Activated naive CD4-positive, alpha-beta T cell treated with anti-CD3 and anti-CD28 coated beads for 36 hours (primary cell): ENCODE measurements at regions of chr1 and their contacts with region 1.

Region 1: DNA sequence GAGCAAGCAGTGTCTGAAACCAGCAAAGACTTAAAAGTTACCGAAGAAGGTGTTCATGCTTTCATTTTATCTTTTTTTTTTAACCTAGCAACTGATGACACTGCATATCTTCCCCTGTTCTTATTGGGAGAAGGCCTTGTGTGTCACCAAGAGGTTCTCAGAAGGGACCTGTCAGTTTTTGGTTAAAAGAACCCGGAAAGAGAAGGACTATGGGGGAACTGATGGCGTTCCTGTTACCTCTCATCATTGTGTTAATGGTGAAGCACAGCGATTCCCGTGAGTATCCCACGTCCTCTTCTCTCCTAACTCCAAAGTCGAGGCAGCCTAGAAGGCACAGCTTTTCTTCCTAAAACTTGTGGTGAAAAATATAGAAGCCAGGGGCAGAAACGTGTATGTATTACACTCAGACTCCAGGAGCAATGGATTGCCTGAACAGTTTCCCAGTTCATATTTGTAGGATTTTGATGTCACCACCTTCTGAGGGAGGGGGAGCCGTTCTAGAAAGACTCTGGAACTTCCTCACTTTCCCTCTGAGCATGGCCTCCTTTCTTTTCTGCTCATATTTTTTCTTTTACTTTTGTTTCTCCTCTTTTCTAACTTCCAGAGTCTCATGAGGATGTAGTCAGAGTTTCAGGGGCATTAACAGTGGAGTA is at the start of gene MR1:
- DNase-seq: peak; percentile 44
- H3K4me3 Mint-ChIP-seq: peak within 1 kb of the TSS; percentile 91
- H3K27ac Mint-ChIP-seq: peak within 1 kb of the TSS; percentile 100
- H3K4me1 Mint-ChIP-seq: peaks cover 49% of the 10 kb centered on the region
- H3K27me3 Mint-ChIP-seq: no peaks in the 10 kb centered on the region
- total RNA-seq, gene MR1: 22.5 to 25.0 TPM

Region 2: DNA sequence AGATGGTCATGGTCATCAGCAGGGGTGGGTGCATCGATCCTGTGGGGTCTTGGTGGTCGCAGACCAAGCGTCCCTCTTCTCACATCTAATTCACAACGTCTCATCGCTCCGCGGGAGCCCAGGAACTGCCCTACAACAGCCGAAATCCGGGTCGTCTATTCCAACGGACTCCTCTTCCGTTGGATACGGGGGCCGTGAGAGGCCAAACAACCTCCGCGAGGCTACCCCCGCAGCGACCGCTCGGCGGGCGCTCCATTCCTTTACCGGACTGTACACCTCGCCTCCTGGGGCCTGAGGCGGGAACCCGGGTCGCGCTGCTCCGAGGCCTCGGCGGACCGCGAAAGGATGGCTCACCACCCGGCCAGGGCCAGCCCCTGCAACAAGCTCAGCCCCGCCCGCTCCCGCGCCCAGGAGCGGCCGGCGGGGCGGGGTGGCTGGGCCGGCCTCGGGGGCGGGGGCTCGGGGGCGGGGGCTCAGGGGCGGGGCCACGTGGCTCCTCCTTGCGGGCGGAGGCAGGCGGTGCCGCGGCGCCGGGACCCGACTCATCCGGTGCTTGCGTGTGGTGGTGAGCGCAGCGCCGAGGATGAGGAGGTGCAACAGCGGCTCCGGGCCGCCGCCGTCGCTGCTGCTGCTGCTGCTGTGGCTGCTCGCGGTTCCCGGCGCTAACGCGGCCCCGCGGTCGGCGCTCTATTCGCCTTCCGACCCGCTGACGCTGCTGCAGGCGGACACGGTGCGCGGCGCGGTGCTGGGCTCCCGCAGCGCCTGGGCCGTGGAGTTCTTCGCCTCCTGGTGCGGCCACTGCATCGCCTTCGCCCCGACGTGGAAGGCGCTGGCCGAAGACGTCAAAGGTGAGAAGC is 879.4 kb before region 1 on chr1 and contains the start of gene QSOX1:
- CTCF ChIA-PET with region 1: no interaction called
- intact Hi-C with region 1: loop called (anchors 10 kb)
- DNase-seq: peak; percentile 91
- H3K4me3 Mint-ChIP-seq: peak within 1 kb of the TSS; percentile 89
- H3K27ac Mint-ChIP-seq: peak within 1 kb of the TSS; percentile 67
- H3K4me1 Mint-ChIP-seq: peaks cover 22% of the 10 kb centered on the region
- H3K27me3 Mint-ChIP-seq: no peaks in the 10 kb centered on the region
- total RNA-seq, gene QSOX1: 27.6 to 31.9 TPM

Region 3: DNA sequence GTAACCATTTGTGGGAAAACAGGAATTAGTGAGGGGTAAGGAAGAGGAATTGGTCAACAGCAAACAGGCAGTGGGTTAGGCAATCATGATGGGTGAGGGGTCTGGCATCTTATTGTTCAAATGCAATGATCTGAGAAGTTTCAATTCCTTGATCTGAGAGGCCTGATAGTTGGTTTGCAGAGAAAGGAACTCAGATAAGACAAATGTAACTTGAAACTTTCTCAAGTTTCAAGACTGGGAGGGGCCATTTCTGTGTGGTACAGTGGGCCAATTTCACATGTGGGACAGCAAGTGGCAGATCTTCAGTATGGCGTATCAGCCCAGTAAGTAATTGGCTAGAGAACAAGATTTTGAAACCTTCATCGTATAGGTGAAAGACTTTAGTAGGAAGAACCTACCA is 299.6 kb before region 1 on chr1:
- CTCF ChIA-PET with region 1: no interaction called
- intact Hi-C with region 1: no loop called
- DNase-seq: no peak
- H3K4me3 Mint-ChIP-seq: no peak overlapping the region
- H3K27ac Mint-ChIP-seq: no peak overlapping the region
- H3K4me1 Mint-ChIP-seq: no peaks in the 10 kb centered on the region
- H3K27me3 Mint-ChIP-seq: no peaks in the 10 kb centered on the region

Region 4: GRCh38 chr1:181014477-181015250 is 19.3 kb before region 1 on chr1:
- CTCF ChIA-PET with region 1: no interaction called
- intact Hi-C with region 1: loop called (anchors 2 kb)
- DNase-seq: peak; percentile 33
- H3K4me3 Mint-ChIP-seq: no peak overlapping the region
- H3K27ac Mint-ChIP-seq: no peak overlapping the region
- H3K4me1 Mint-ChIP-seq: peaks cover 43% of the 10 kb centered on the region
- H3K27me3 Mint-ChIP-seq: no peaks in the 10 kb centered on the region

Region 5: GRCh38 chr1:181062836-181063428 is 29.0 kb after region 1 on chr1:
- CTCF ChIA-PET with region 1: no interaction called
- intact Hi-C with region 1: loop called (anchors 2 kb)
- DNase-seq: peak; percentile 57
- H3K4me3 Mint-ChIP-seq: peak overlapping the region; percentile 22
- H3K27ac Mint-ChIP-seq: peak overlapping the region; percentile 3
- H3K4me1 Mint-ChIP-seq: peaks cover 17% of the 10 kb centered on the region
- H3K27me3 Mint-ChIP-seq: no peaks in the 10 kb centered on the region

Region 6: DNA sequence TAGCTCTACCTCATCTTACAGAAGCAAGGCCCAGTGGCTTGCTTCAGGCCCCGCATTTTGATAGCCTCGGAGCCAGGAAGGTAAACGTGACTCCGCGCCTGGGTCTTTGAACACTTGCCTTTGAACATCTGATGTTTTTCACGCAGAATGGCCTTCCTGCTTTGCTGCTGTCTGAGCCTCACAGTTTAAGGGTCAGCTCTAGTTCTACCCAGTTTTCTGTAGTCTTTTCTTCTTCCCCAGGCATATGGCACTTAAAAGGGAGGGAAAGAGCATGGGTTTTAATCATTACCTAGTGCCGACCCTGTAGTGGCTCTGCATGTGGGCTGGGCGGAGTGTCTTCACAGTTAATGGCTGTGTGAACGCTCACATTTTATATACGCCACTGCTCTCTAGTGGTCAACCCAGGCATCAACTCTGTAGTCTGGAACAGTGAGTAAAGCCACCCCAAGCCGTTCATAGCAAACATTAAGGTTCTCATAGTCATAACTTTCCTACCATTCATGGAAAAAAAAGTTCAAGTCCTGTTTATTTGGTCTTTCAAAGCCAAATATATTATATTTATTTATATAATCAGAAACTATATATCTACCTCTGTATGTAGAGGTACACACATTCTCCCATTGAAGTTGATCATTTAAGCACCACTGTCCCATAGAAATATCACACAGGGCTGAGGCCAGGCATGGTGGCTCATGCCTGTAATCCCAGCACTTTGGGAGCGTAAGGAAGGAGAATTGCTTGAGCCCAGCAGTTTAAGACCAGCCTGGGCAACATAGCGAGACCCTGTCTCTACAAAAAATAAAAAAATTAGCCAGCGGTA is 132.7 kb after region 1 on chr1:
- CTCF ChIA-PET with region 1: interaction called, 7 read pairs
- intact Hi-C with region 1: loop called (anchors 1 kb)
- DNase-seq: peak; percentile 88
- H3K4me3 Mint-ChIP-seq: no peak overlapping the region
- H3K27ac Mint-ChIP-seq: no peak overlapping the region
- H3K4me1 Mint-ChIP-seq: peaks cover 5% of the 10 kb centered on the region
- H3K27me3 Mint-ChIP-seq: no peaks in the 10 kb centered on the region